IMR-90 (cell line): ENCODE measurements at regions of chr20 and their contacts with region 1.

Region 1: GRCh38 chr20:36541227-36541763 is at the start of gene MYL9:
- DNase-seq: peak; percentile 62
- ATAC-seq: peak; percentile 79
- H3K4me3 ChIP-seq: peak within 1 kb of the TSS; percentile 89
- H3K27ac ChIP-seq: peak within 1 kb of the TSS; percentile 99
- H3K4me1 ChIP-seq: peaks cover 27% of the 10 kb centered on the region
- H3K27me3 ChIP-seq: no peaks in the 10 kb centered on the region
- CTCF ChIP-seq: no peak
- POLR2A ChIP-seq: peak; percentile 54; the same call in 1 of the 2 replicates
- RAD21 ChIP-seq: no peak
- total RNA-seq, gene MYL9: 90.0 and 97.5 TPM in 2 replicates

Region 2: GRCh38 chr20:36214684-36215256 is 326.5 kb before region 1 on chr20:
- CTCF ChIA-PET with region 1: no interaction called
- POLR2A ChIA-PET with region 1: no interaction called
- dilution Hi-C with region 1: no loop called
- in situ Hi-C with region 1: no loop called
- intact Hi-C with region 1: loop called (anchors 5 kb)
- DNase-seq: peak; percentile 33
- ATAC-seq: peak; percentile 81
- H3K4me3 ChIP-seq: no peak overlapping the region
- H3K27ac ChIP-seq: no peak overlapping the region
- H3K4me1 ChIP-seq: no peaks in the 10 kb centered on the region
- H3K27me3 ChIP-seq: no peaks in the 10 kb centered on the region
- CTCF ChIP-seq: peak; percentile 56
- POLR2A ChIP-seq: no peak
- RAD21 ChIP-seq: peak; percentile 58

Region 3: GRCh38 chr20:36460648-36461599 is 80.4 kb before region 1 on chr20:
- CTCF ChIA-PET with region 1: no interaction called
- POLR2A ChIA-PET with region 1: no interaction called
- dilution Hi-C with region 1: no loop called
- in situ Hi-C with region 1: no loop called
- intact Hi-C with region 1: loop called (anchors 2 kb)
- DNase-seq: peak; percentile 84
- ATAC-seq: peak; percentile 88
- H3K4me3 ChIP-seq: peak overlapping the region; percentile 82
- H3K27ac ChIP-seq: peak overlapping the region; percentile 90
- H3K4me1 ChIP-seq: peaks cover 21% of the 10 kb centered on the region
- H3K27me3 ChIP-seq: no peaks in the 10 kb centered on the region
- CTCF ChIP-seq: no peak
- POLR2A ChIP-seq: peak; percentile 88
- RAD21 ChIP-seq: no peak